ENCODE measurements at regions of chr14 and their contacts with region 1.

Region 1: DNA sequence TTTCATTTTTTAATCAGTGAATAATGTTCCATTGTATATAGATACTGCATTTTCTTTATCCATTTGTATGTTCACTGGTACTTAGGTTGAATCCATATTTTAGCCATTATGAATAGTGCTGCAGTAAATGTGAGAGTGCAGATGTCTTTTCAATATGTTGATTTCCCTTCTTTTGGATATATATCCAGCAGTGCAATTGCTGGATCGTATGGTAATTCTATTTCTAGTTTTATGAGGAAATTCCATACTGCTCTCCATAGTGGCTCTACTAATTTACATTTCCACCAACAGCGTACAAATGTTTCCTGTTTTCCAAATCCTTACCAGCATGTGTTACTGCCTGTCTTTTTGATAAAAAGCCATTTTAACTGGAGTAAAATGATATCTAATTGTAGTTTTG is 288.5 kb upstream of the GARIN2 start:
- DNase-seq: no peak
- ATAC-seq: no peak
- H3K4me3 ChIP-seq: no peak overlapping the region
- H3K27ac ChIP-seq: no peak overlapping the region
- H3K4me1 ChIP-seq: no peaks in the 10 kb centered on the region
- H3K27me3 ChIP-seq: no peaks in the 10 kb centered on the region
- CTCF ChIP-seq: no peak

Region 2: DNA sequence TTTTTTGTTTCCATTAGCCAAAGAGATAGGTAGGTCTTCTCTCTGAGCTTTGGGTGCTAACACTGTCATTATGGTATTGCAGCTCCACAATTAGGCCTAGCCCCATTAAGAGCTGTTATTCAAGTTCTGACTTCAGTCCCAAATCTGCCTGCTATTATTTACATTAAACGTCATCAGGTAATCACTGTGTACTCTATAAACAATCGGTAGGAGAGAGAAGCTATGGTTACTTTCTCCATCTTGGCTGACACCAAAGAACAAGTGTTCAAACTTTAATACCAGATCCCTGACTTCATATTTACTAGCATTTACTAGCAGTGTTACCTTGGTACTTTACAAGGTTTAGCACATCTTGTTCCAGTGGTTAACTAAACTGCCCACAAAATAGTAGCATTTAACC is 16.6 kb before region 1 on chr14:
- CTCF ChIA-PET with region 1: no interaction called
- POLR2A ChIA-PET with region 1: no interaction called
- intact Hi-C with region 1: loop called (anchors 1 kb)
- DNase-seq: peak; percentile 47
- ATAC-seq: peak; percentile 69
- H3K4me3 ChIP-seq: no peak overlapping the region
- H3K27ac ChIP-seq: peak overlapping the region; percentile 42
- H3K4me1 ChIP-seq: peaks cover 13% of the 10 kb centered on the region
- H3K27me3 ChIP-seq: no peaks in the 10 kb centered on the region
- CTCF ChIP-seq: no peak